Thyroid gland (tissue), 4 donors: ENCODE measurements at regions of chr19 and their contacts with region 1.

Region 1: DNA sequence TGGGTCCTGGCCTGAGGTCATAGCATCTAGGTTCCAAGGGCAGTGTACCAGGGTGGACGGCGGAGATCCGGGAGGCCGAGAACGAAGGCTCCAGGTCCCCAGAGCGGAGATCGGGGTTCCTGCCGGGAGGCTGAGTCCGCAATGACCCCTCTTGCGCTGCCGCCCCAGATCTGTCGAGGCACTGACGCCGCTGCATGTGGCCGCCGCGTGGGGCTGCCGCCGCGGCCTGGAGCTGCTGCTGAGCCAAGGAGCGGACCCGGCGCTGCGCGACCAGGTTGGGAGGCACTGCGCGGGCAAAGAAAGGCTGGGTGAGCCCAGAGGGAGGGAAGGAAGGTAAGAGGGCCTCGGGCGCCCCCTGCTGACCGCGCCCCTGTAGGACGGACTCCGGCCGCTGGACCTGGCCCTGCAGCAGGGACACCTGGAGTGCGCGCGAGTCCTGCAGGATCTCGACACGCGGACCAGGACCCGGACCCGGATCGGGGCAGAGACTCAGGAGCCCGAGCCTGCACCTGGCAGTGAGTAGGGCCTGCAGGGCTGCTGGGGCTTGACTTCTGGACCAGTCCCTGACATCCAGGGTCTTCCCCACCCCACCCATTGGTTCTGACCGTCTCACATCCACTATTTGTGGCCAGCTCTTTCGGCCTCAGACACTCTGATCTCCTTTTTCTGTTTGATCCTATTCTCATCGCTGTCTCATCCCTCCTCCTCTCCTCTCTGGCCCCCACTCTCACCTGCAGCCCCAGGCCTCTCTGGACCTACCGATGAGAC is 971 bp downstream of the ANKLE1 start:
- DNase-seq: peak; percentile 83 to 84
- H3K4me3 ChIP-seq: no peak overlapping the region
- H3K27ac ChIP-seq: no peak overlapping the region
- H3K4me1 ChIP-seq: peaks cover 12 to 13% of the 10 kb centered on the region in 2 donors
- H3K27me3 ChIP-seq: peaks cover 9% of the 10 kb centered on the region
- CTCF ChIP-seq: peak; percentile 71 to 90 (median 88)
- POLR2A ChIP-seq: no peak

Region 2: GRCh38 chr19:17069218-17069617 is 213.5 kb before region 1 on chr19:
- intact Hi-C with region 1: loop called (anchors 5 kb)
- DNase-seq: no peak
- H3K4me3 ChIP-seq: no peak overlapping the region
- H3K27ac ChIP-seq: no peak overlapping the region
- H3K4me1 ChIP-seq: peaks cover 3 to 4% of the 10 kb centered on the region in 2 donors
- H3K27me3 ChIP-seq: no peaks in the 10 kb centered on the region
- CTCF ChIP-seq: no peak
- POLR2A ChIP-seq: no peak

Region 3: GRCh38 chr19:17170538-17171297 is 112.0 kb before region 1 on chr19:
- intact Hi-C with region 1: no loop called
- DNase-seq: no peak
- H3K4me3 ChIP-seq: no peak overlapping the region
- H3K27ac ChIP-seq: no peak overlapping the region
- H3K4me1 ChIP-seq: no peaks in the 10 kb centered on the region
- H3K27me3 ChIP-seq: no peaks in the 10 kb centered on the region
- CTCF ChIP-seq: no peak
- POLR2A ChIP-seq: no peak

Region 4: DNA sequence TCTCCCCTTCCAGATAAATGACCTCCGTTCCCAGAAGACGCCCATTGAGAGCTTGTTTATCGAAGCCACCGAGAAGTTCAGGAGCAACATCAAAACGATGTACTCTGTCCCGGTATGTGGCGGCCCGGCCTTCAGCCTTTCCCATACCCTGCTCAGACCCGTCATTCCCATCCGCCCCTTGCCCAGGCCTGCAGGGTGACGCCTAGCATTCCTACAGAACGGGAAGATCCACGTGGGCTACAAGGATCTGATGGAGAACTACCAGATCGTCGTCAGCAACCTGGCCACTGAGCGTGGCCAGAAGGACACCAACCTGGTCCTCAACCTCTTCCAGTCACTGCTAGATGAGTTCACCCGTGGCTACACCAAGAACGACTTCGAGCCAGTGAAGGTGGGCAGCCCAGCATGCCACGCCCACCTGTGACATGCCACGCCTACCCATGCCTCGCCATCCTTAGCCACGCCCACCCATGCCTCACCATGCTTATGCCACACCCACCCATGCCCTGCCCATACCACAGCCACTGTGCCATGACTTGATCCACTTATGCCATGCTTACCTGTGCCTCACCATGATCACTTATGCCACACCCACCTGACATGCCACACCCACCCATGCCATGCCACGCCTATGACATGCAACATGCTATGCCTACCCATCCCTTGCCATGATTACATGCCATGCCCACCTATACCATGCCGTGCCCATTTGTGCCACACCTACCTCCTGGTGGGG is 80.6 kb before region 1 on chr19:
- intact Hi-C with region 1: loop called (anchors 5 kb)
- DNase-seq: no peak
- H3K4me3 ChIP-seq: no peak overlapping the region
- H3K27ac ChIP-seq: no peak overlapping the region
- H3K4me1 ChIP-seq: no peaks in the 10 kb centered on the region
- H3K27me3 ChIP-seq: no peaks in the 10 kb centered on the region
- CTCF ChIP-seq: no peak
- POLR2A ChIP-seq: no peak

Region 5: DNA sequence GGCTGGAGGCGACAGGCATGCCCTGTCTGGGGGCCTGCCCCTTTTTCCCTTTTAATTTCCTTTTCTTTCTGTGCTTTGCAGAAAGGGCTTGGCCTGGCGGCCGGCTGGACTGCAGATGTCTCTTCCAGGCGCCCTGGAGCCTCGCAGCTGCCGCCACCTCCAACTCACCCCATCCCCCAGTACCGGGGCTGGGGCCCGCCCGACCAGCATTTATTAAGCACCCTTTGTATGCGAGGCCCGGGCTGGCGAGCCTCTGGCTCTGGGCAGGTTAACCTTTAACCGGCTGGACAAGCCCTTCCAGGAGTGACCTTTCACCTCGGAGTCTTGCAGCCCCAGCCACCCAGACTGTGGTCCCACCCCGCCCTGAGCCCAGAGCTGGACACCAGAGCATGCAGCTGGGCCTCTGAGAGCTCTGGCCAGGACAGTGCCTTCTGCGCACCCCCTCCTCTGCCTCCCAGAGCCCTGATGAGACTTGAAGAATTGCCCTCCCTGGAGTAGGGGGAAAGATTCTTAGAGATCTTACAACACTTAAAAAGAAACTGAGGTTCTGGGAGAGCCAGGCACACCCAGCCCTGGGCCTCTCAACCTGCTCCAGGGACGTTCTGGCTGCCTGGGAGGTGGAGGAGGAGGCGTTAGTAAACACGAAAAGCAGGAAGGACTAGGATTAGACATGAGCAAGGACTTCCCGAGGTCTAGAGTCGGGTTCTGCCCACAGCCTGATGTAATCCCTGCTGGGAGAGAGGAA is 35.8 kb before region 1 on chr19:
- intact Hi-C with region 1: no loop called
- DNase-seq: peak; percentile 29 to 37
- H3K4me3 ChIP-seq: peak overlapping the region in 2 of 3 donors; percentile 49 to 55
- H3K27ac ChIP-seq: peak overlapping the region; percentile 59 to 82 (median 62)
- H3K4me1 ChIP-seq: peaks cover 29% of the 10 kb centered on the region in 2 donors
- H3K27me3 ChIP-seq: no peaks in the 10 kb centered on the region
- CTCF ChIP-seq: no peak
- POLR2A ChIP-seq: no peak

Region 6: DNA sequence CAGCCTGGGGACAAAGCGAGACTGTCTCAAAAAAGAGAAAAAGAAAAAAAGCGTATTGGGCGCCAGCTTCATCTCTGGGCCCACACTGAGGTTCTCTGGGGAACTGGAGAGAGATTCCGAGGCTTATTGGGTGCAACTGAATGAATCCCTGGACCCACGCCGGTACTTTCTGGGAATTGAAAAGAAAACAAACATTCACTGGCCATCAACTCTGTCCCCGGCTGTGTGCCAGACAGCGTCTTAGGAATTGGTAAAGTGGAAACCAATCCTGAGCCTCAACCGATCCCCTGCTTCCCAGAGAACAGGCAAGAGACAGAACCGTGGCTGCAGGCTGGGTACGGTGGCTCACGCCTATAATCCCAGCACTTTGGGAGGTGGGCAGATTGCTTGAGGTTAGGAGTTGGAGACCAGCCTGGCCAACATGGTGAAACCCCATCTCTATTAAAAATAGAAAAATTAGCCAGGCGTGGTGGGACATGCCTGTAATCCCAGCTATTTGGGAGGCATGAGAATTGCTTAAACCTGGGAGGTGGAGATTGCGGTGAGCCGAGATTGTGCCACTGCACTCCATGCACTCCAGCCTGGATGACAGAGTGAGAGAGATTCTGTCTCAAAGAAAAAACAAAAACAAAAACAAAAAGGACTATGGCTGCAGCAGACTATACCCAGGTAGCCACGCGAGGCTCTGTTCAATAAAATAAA is 43.4 kb after region 1 on chr19:
- intact Hi-C with region 1: no loop called
- DNase-seq: peak; percentile 24 to 31
- H3K4me3 ChIP-seq: no peak overlapping the region
- H3K27ac ChIP-seq: no peak overlapping the region
- H3K4me1 ChIP-seq: peaks cover 10 to 22% of the 10 kb centered on the region in 2 donors
- H3K27me3 ChIP-seq: no peaks in the 10 kb centered on the region
- CTCF ChIP-seq: no peak
- POLR2A ChIP-seq: no peak

Region 7: DNA sequence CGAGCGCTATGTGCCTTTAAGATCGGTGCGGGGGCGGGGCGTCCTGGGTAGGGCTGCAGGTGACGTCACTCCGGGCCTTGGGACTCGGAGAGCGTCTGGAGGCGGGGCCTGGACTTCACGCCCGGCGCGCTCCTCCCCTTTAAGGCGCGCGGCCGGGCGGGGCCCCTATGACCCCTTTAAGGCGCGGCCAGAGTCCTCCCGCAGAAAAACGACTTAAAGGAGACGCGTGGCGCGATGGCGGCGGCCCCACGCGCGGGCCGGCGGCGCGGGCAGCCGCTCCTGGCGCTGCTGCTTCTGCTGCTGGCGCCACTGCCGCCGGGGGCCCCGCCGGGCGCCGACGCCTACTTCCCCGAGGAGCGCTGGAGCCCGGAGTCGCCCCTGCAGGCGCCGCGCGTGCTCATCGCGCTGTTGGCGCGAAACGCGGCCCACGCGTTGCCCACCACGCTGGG is 272.8 kb after region 1 on chr19 and contains the start of gene COLGALT1:
- intact Hi-C with region 1: no loop called
- DNase-seq: peak; percentile 99
- H3K4me3 ChIP-seq: peak within 1 kb of the TSS; percentile 93 to 95 (median 93)
- H3K27ac ChIP-seq: peak within 1 kb of the TSS; percentile 55 to 82 (median 75)
- H3K4me1 ChIP-seq: peaks cover 12 to 15% of the 10 kb centered on the region in 2 donors
- H3K27me3 ChIP-seq: no peaks in the 10 kb centered on the region
- CTCF ChIP-seq: peak in 1 of 6 experiments; percentile 27
- POLR2A ChIP-seq: peak in 1 of 2 donors; percentile 55
- total RNA-seq, gene COLGALT1: 19.3 to 35.9 (median 33.0) TPM